GM12878 (cell line): ENCODE measurements at regions of chr2 and their contacts with region 1.

Region 1: GRCh38 chr2:219498280-219499057 is at the start of gene GMPPA:
- DNase-seq: peak; percentile 96
- ATAC-seq: peak; percentile 93
- H3K4me3 ChIP-seq: peak within 1 kb of the TSS; percentile 83
- H3K27ac ChIP-seq: peak within 1 kb of the TSS; percentile 79
- H3K4me1 ChIP-seq: peaks cover 15% of the 10 kb centered on the region
- H3K27me3 ChIP-seq: peaks cover 5 to 15% of the 10 kb centered on the region in 2 experiments
- CTCF ChIP-seq: no peak
- EP300 ChIP-seq: 0 out of 4 replicates have a peak, but pooled peaks of 1 of the 2 experiments have one; percentile 7
- POLR2A ChIP-seq: peak; percentile 92
- RAD21 ChIP-seq: no peak
- polyA plus RNA-seq, gene GMPPA: 1.9 to 10.2 TPM

Region 2: DNA sequence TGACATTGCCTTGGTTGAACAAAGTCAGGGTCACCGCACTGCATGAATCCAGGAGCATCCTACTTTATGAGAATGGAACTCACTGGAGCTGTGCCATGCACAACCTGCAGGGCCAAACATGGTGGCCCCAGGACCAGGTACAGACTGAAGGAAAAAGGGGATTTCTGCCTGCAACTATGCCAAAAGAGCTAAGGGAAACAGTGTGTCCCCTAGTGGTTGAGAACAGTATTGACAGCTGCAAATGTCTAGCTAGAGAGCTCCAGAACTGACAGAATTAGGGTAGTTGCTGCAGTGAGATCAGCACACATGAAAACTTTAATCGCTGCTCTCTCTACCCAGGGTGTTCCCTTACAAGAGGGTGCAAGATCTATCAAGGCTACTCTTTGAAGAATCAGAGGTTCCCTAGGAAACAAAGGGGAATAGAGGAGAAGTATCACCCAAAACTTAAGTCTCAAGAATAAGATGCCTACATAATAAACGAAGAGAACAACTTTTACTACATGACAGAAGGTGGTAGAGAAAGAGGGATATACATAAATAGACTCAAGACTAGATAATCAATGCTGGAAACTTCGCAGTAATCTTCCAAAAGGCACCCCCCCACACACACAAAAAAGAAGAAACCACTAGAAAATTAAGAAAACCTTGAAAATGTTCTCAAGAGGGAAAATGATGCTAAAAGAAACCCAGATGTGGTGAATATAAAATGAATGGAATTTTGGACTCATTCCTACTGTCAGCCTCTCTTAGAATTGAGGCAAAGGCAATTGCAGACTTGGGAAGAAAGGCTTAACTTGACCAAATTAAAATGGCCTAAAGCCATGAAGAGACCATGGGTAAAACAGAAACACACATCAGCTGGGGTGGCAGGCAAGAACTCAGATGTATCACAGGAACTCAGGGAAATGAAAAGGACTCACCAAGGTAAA is 394.1 kb before region 1 on chr2:
- CTCF ChIA-PET with region 1: no interaction called
- POLR2A ChIA-PET with region 1: no interaction called
- RAD21 ChIA-PET with region 1: no interaction called
- SMC1A ChIA-PET with region 1: no interaction called
- in situ Hi-C with region 1: no loop called
- intact Hi-C with region 1: no loop called
- DNase-seq: no peak
- ATAC-seq: peak; percentile 97
- H3K4me3 ChIP-seq: no peak overlapping the region
- H3K27ac ChIP-seq: no peak overlapping the region
- H3K4me1 ChIP-seq: no peaks in the 10 kb centered on the region
- H3K27me3 ChIP-seq: no peaks in the 10 kb centered on the region
- CTCF ChIP-seq: peak; percentile 70 to 95 (median 90)
- EP300 ChIP-seq: no peak
- POLR2A ChIP-seq: no peak
- RAD21 ChIP-seq: peak; percentile 54

Region 3: GRCh38 chr2:219294356-219295351 is 203.8 kb before region 1 on chr2:
- CTCF ChIA-PET with region 1: no interaction called
- POLR2A ChIA-PET with region 1: no interaction called
- RAD21 ChIA-PET with region 1: no interaction called
- SMC1A ChIA-PET with region 1: no interaction called
- in situ Hi-C with region 1: no loop called
- intact Hi-C with region 1: no loop called
- DNase-seq: peak; percentile 60
- ATAC-seq: peak; percentile 93
- H3K4me3 ChIP-seq: peak overlapping the region; percentile 59; the same call in 1 of the 2 replicates
- H3K27ac ChIP-seq: no peak overlapping the region
- H3K4me1 ChIP-seq: peaks cover 8% of the 10 kb centered on the region
- H3K27me3 ChIP-seq: peaks cover 0 to 6% of the 10 kb centered on the region in 2 experiments; a peak in 2 of 4 replicates
- CTCF ChIP-seq: peak; percentile 98 to 99 (median 99)
- EP300 ChIP-seq: no peak
- POLR2A ChIP-seq: peak; percentile 77
- RAD21 ChIP-seq: peak; percentile 77

Region 4: GRCh38 chr2:219388127-219388844 is 110.2 kb before region 1 on chr2:
- CTCF ChIA-PET with region 1: interaction called, 6 read pairs
- POLR2A ChIA-PET with region 1: interaction called, 15 read pairs
- RAD21 ChIA-PET with region 1: interaction called, 5 read pairs
- SMC1A ChIA-PET with region 1: no interaction called
- in situ Hi-C with region 1: no loop called
- intact Hi-C with region 1: no loop called
- DNase-seq: peak; percentile 83
- ATAC-seq: peak; percentile 86
- H3K4me3 ChIP-seq: peak overlapping the region; percentile 8; the same call in 1 of the 2 replicates
- H3K27ac ChIP-seq: no peak overlapping the region
- H3K4me1 ChIP-seq: peaks cover 5% of the 10 kb centered on the region
- H3K27me3 ChIP-seq: no peaks in the 10 kb centered on the region
- CTCF ChIP-seq: peak; percentile 48 to 67 (median 63); a peak in 5 of 6 replicates
- EP300 ChIP-seq: no peak
- POLR2A ChIP-seq: no peak
- RAD21 ChIP-seq: no peak

Region 5: DNA sequence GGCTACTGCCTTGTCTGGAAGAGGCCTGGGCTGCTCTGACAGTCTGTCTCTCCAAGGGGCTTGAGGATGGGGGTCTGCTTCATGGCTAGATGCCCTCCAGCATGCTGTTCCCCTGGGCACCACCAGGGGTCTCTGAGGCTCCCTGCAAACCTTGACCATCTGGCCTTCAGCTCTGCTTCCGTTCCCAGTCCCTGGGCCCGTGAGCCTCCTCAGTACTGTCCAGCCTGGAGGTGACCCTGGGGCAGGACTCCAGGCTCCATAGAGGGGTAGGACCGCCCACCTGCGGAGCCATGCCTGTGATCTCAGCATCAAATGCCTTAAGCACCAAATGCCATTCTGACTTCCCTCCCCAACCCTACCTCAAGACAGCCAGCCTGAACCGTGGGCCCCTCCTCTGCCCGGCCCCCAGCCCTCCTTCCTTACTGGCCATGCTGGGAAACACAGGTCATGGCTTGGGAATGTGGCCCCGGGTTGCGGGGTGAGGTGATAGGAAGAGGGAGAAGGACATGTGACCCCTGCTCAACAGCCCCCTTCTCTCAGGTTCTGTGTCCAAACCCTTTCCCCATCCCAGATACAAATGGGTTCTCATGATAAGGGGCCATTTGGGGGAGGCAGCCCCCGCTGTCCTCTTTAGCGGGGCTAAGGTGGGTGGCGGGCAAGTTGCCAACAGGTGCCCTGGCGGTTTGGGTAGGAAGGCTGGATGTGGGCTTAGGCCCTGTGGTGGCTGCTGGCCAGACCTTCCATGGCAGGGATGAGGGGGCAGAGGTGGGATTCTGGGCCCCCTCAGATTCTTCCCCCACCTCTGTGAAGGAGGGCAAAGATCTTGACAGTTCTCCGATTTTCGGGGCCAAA is 38.8 kb before region 1 on chr2:
- CTCF ChIA-PET with region 1: interaction called, 15 read pairs
- POLR2A ChIA-PET with region 1: no interaction called
- RAD21 ChIA-PET with region 1: interaction called, 6 read pairs
- SMC1A ChIA-PET with region 1: interaction called, 3 read pairs
- in situ Hi-C with region 1: no loop called
- intact Hi-C with region 1: no loop called
- DNase-seq: no peak
- ATAC-seq: peak; percentile 89
- H3K4me3 ChIP-seq: no peak overlapping the region
- H3K27ac ChIP-seq: no peak overlapping the region
- H3K4me1 ChIP-seq: no peaks in the 10 kb centered on the region
- H3K27me3 ChIP-seq: peaks cover 0 to 2% of the 10 kb centered on the region in 2 experiments; a peak in 2 of 4 replicates
- CTCF ChIP-seq: peak; percentile 82 to 99 (median 86)
- EP300 ChIP-seq: no peak
- POLR2A ChIP-seq: no peak
- RAD21 ChIP-seq: peak; percentile 52

Region 6: GRCh38 chr2:219509780-219510511 is 11.5 kb after region 1 on chr2:
- CTCF ChIA-PET with region 1: interaction called, 26 read pairs
- POLR2A ChIA-PET with region 1: no interaction called
- RAD21 ChIA-PET with region 1: interaction called, 8 read pairs
- SMC1A ChIA-PET with region 1: interaction called, 4 read pairs
- in situ Hi-C with region 1: no loop called
- intact Hi-C with region 1: no loop called
- DNase-seq: no peak
- ATAC-seq: peak; percentile 88
- H3K4me3 ChIP-seq: no peak overlapping the region
- H3K27ac ChIP-seq: no peak overlapping the region
- H3K4me1 ChIP-seq: no peaks in the 10 kb centered on the region
- H3K27me3 ChIP-seq: peaks cover 12 to 14% of the 10 kb centered on the region in 2 experiments; a peak in 3 of 4 replicates
- CTCF ChIP-seq: peak; percentile 45 to 69 (median 63)
- EP300 ChIP-seq: no peak
- POLR2A ChIP-seq: no peak
- RAD21 ChIP-seq: 0 out of 2 replicates have a peak, but pooled peaks have one; percentile 12

Region 7: DNA sequence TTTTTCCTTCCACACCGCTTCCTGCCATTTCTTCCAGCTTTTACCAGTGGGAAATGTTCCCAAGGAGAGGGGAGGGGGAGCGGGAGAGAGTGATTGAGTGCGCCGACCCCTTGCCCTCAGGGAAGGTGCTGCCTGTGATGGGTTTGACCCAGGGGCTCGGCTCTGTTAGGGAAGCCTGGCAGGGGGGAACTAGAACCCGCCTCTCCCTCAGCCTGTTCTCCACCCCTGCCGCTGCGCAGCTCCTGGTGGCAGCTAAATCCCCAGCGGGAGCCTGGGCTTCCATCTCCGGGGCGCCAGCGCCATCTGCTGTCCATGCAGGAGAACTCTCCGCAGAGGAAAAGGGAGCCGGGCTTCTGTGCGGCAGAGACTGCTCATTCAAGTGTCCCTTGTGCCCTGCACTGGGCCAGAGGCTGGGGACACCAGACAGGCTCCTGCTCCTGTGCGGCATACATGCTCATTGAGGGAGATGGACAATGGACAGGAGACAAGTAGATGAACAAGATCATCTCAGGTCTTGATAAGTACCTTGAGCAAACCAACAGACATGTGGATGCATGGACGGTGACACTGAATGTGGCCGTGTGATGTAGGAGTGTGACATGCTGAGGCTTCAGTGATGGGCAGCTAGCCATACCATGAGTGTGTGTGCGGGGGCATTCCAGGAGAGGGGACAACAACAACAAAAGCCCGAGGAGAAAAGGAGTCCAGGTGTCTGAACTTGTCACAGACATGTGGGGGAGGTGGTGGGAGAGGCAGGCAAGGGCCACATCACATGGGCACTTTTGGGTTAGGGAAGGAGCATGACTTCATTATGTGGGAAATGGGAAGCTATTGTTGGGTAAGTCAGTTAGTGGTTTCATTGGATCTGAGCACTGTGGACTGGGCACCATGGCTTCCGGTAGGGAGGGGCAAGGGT is 31.8 kb after region 1 on chr2:
- CTCF ChIA-PET with region 1: interaction called, 224 read pairs
- POLR2A ChIA-PET with region 1: no interaction called
- RAD21 ChIA-PET with region 1: interaction called, 42 read pairs
- SMC1A ChIA-PET with region 1: interaction called, 41 read pairs
- in situ Hi-C with region 1: no loop called
- intact Hi-C with region 1: loop called (anchors 1 kb)
- DNase-seq: no peak
- ATAC-seq: peak; percentile 98
- H3K4me3 ChIP-seq: no peak overlapping the region
- H3K27ac ChIP-seq: no peak overlapping the region
- H3K4me1 ChIP-seq: no peaks in the 10 kb centered on the region
- H3K27me3 ChIP-seq: peaks cover 6 to 16% of the 10 kb centered on the region in 2 experiments
- CTCF ChIP-seq: peak; percentile 93 to 99 (median 94); a peak in 5 of 6 replicates
- EP300 ChIP-seq: no peak
- POLR2A ChIP-seq: no peak
- RAD21 ChIP-seq: peak; percentile 99